CD14-positive monocyte (primary cell): ENCODE measurements at regions of chr15 and their contacts with region 1.

Region 1: DNA sequence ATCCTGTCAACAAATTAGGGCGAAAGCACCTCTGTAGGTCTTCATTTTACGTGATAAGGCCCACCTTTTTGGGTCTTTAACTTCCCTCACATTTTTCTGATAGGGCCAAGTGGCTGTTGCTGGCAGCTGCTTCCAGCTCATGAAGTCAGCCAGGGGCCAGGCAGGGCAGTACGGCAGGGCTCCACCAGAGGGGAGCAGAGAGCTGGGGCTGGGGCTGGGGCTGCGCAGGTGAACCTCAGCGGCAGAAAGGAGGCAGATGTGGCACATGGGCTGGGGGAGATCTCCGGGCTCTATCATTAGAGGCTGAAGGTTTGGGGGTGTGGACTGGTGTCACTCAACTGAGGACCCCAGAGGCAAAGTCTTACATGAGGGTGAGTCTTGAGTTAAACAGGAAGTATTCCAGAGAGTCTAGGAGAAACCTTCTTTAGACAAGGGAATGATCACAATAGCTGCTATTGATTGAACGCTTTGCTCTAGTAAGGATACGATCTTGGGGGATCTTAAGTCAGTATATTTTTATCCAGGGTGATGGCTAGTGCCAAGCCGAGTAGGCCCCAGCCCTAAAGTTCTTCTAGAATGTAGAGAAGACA is 62.8 kb upstream of the MEX3B start:
- DNase-seq: peak in 2 of 3 donors; percentile 11 to 30
- H3K4me3 ChIP-seq: no peak overlapping the region
- H3K4me3 Mint-ChIP-seq: no peak overlapping the region
- H3K27ac ChIP-seq: no peak overlapping the region
- H3K27ac Mint-ChIP-seq: peak overlapping the region in 1 of 7 donors; percentile 32
- H3K4me1 ChIP-seq: no peaks in the 10 kb centered on the region
- H3K4me1 Mint-ChIP-seq: peaks cover 4% of the 10 kb centered on the region
- H3K27me3 ChIP-seq: no peaks in the 10 kb centered on the region
- H3K27me3 Mint-ChIP-seq: peaks cover 0 to 4% (median 1%) of the 10 kb centered on the region in 3 donors
- CTCF ChIP-seq: peak; percentile 84

Region 2: DNA sequence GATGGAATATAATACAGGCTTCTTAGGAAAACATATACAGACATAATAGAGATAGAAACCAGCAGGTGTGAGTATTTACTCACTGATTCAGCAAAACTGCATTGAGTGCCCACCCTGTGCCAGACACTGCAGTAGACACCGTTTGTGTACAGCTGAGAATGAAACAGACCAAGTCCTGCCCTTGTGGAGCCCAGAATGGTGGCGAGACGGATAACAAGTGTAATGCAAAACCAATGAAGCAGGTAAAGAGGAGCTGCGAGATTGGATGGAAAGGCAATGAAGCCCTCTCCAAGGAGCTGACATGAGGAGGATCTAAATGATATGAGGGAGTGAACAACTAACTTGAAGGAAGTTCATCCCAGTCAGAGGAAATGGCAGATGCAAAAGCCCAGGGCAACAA is 319.2 kb before region 1 on chr15:
- intact Hi-C with region 1: no loop called
- DNase-seq: no peak
- H3K4me3 ChIP-seq: no peak overlapping the region
- H3K4me3 Mint-ChIP-seq: no peak overlapping the region
- H3K27ac ChIP-seq: no peak overlapping the region
- H3K27ac Mint-ChIP-seq: no peak overlapping the region
- H3K4me1 ChIP-seq: no peaks in the 10 kb centered on the region
- H3K4me1 Mint-ChIP-seq: no peaks in the 10 kb centered on the region
- H3K27me3 ChIP-seq: no peaks in the 10 kb centered on the region
- H3K27me3 Mint-ChIP-seq: peaks cover 0 to 4% (median 1%) of the 10 kb centered on the region in 3 donors
- CTCF ChIP-seq: no peak

Region 3: GRCh38 chr15:82197733-82198594 is 89.4 kb after region 1 on chr15:
- intact Hi-C with region 1: loop called in 1 of 2 experiments (anchors 5 kb)
- DNase-seq: peak; percentile 11 to 35 (median 26)
- H3K4me3 ChIP-seq: no peak overlapping the region
- H3K4me3 Mint-ChIP-seq: no peak overlapping the region
- H3K27ac ChIP-seq: no peak overlapping the region
- H3K27ac Mint-ChIP-seq: peak overlapping the region in 1 of 7 donors; percentile 45
- H3K4me1 ChIP-seq: no peaks in the 10 kb centered on the region
- H3K4me1 Mint-ChIP-seq: no peaks in the 10 kb centered on the region
- H3K27me3 ChIP-seq: no peaks in the 10 kb centered on the region
- H3K27me3 Mint-ChIP-seq: peaks cover 0 to 2% (median 2%) of the 10 kb centered on the region in 3 donors
- CTCF ChIP-seq: peak; percentile 76